Mammary epithelial cell (primary cell): ENCODE measurements at regions of chr2 and their contacts with region 1.

Region 1: DNA sequence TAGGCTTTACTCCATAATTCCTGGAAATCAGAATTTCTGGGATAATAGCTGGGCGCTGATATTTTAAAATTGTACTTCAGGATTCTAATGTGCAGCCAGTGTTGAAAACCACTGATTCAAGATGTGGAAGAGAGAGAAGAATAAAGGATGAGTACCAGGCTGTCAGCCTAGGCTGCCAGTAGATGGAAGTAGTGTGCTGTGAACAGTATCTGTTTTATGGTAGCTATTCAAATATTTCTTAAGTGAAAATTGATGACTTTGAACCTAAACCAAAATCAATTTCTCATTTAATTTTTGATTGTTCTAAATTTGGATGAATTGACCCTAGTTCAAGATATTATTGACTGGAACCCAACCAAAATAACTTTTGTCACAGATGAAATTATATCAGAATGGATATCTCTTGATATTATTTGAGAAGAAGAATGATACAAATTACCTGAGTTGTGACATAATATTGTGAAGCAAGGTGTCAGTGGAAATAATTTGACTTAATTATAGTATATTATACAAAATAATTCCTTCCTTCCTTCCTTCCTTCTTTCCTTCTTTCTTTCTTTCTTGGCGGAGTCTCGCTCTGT is 88.1 kb downstream of the COMMD1 start:
- DNase-seq: peak; percentile 44
- H3K4me3 ChIP-seq: no peak overlapping the region
- H3K27ac ChIP-seq: no peak overlapping the region
- H3K4me1 ChIP-seq: no peaks in the 10 kb centered on the region
- H3K27me3 ChIP-seq: no peaks in the 10 kb centered on the region
- CTCF ChIP-seq: peak; percentile 79 to 94

Region 2: DNA sequence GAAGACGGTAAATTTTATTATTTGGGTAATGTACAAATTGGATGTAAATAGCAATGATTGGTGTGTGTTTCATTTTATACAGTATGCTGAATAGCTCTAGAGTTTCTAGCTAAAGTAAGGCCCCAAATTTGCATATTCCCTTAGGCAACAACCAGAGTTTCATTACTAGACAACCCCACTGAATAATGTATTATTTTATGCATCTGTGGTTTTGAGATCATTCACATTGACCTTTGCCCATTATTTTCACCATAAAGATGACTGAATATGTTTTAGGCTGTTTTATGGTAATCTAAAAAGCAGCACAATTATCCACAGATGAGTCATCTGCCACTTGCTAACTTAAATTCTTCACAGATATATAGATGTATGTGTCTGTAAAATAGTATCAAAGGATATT is 876.0 kb before region 1 on chr2:
- CTCF ChIA-PET with region 1: no interaction called
- dilution Hi-C with region 1: no loop called
- in situ Hi-C with region 1: no loop called
- intact Hi-C with region 1: no loop called
- DNase-seq: peak; percentile 55
- H3K4me3 ChIP-seq: no peak overlapping the region
- H3K27ac ChIP-seq: no peak overlapping the region
- H3K4me1 ChIP-seq: no peaks in the 10 kb centered on the region
- H3K27me3 ChIP-seq: no peaks in the 10 kb centered on the region
- CTCF ChIP-seq: no peak

Region 3: GRCh38 chr2:61845320-61845719 is 148.2 kb before region 1 on chr2:
- CTCF ChIA-PET with region 1: no interaction called
- dilution Hi-C with region 1: no loop called
- in situ Hi-C with region 1: no loop called
- intact Hi-C with region 1: no loop called
- DNase-seq: no peak
- H3K4me3 ChIP-seq: no peak overlapping the region
- H3K27ac ChIP-seq: no peak overlapping the region
- H3K4me1 ChIP-seq: no peaks in the 10 kb centered on the region
- H3K27me3 ChIP-seq: no peaks in the 10 kb centered on the region
- CTCF ChIP-seq: no peak

Region 4: DNA sequence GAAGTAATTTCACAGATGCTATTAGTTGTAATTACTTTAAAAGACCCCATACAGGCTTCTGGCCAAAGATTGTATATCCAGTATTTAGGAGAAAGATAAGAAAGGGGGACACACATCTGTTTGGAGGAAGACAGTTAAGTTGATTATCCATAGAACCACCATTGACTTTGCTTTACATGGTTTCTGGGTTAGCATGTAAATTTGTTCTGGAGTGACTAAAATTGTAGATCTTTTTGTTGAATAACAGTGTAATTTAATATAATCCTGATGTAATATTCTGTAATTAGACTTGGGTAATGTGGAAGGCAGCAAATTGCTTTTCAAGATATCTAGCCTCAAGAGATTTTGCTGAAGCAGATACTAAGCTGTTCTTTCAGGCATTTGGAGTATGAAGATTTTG is 70.8 kb before region 1 on chr2:
- CTCF ChIA-PET with region 1: no interaction called
- dilution Hi-C with region 1: loop called (anchors 5 kb)
- in situ Hi-C with region 1: no loop called
- intact Hi-C with region 1: loop called (anchors 1 kb)
- DNase-seq: no peak
- H3K4me3 ChIP-seq: no peak overlapping the region
- H3K27ac ChIP-seq: no peak overlapping the region
- H3K4me1 ChIP-seq: no peaks in the 10 kb centered on the region
- H3K27me3 ChIP-seq: no peaks in the 10 kb centered on the region
- CTCF ChIP-seq: no peak

Region 5: DNA sequence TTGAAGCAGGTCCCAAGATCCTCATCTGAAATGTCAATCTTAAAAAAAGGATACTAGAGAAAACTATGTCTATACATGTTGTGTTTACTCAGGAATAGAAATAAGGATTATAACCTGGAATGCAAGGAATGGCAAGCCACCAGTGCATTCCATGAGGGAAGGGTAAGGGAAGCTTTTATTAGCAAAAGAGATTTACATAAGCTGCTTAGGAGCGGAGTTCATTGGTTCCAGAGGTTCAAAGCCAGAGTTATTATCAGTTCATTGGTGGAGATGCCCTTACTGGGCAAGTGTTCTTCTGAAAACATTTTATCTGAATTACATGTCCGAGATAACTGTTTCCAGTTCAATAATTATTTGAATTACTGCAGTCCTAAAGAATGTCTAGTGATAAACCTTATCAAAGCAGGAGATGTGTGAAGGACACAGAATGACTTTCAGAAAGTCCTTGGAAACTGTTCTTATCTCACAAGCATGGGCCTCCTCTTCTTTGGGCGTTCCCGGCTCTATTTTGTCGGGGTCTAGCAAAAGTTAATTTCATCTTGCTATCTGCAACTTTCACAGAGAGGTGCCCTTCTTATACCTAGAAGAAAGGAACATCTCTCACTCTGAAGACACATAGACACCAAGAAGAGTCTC is 64.6 kb before region 1 on chr2:
- CTCF ChIA-PET with region 1: no interaction called
- dilution Hi-C with region 1: loop called (anchors 5 kb)
- in situ Hi-C with region 1: no loop called
- intact Hi-C with region 1: no loop called
- DNase-seq: no peak
- H3K4me3 ChIP-seq: no peak overlapping the region
- H3K27ac ChIP-seq: no peak overlapping the region
- H3K4me1 ChIP-seq: no peaks in the 10 kb centered on the region
- H3K27me3 ChIP-seq: no peaks in the 10 kb centered on the region
- CTCF ChIP-seq: no peak

Region 6: DNA sequence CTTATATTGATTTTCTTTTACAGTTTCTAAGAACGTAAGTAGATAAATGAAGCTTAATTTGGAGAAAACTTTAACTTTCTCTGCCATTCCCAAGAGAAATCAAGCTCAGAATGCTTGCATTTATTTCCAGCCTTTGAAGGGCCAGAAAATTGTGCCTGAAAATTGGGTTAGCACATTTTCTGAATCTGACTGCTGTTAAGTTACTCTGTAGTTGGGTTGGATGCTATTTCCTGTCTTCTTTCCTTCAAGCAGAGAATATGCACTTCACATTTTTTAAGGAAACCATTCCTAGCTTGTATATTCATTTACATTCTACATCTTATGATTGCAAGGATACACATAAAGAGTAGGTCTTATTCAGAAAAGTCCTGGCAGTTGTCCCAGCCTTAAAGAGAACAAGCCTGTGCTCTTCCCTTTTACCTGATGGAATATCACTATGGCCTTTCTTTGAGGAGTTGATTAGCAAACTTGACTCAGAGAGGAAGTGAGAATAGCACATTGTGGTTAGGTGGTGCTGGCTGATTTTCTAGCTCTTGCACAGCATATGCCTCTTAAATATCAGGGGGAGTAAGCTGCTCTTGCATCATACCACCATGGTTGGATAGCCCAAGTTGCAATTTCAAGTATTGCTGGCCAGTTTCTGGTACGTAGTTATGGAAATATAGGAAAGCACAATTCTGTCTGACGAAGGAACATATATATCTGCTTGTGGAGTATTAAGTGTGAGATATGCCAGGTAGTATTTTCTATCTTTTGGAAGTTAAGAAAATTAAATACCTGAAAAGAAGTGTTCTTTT is 45.6 kb after region 1 on chr2:
- CTCF ChIA-PET with region 1: no interaction called
- dilution Hi-C with region 1: no loop called
- in situ Hi-C with region 1: no loop called
- intact Hi-C with region 1: no loop called
- DNase-seq: peak; percentile 93
- H3K4me3 ChIP-seq: no peak overlapping the region
- H3K27ac ChIP-seq: peak overlapping the region; percentile 53
- H3K4me1 ChIP-seq: peaks cover 31% of the 10 kb centered on the region
- H3K27me3 ChIP-seq: no peaks in the 10 kb centered on the region
- CTCF ChIP-seq: no peak

Region 7: GRCh38 chr2:62195421-62196277 is 202.1 kb after region 1 on chr2 and contains the start of gene B3GNT2:
- CTCF ChIA-PET with region 1: no interaction called
- dilution Hi-C with region 1: no loop called
- in situ Hi-C with region 1: no loop called
- intact Hi-C with region 1: loop called (anchors 1 kb)
- DNase-seq: peak; percentile 66
- H3K4me3 ChIP-seq: peak within 1 kb of the TSS; percentile 73 to 95 (median 76)
- H3K27ac ChIP-seq: peak within 1 kb of the TSS; percentile 68
- H3K4me1 ChIP-seq: peaks cover 10% of the 10 kb centered on the region
- H3K27me3 ChIP-seq: no peaks in the 10 kb centered on the region
- CTCF ChIP-seq: no peak
- total RNA-seq, gene B3GNT2: 35.2 to 44.8 TPM

Region 8: GRCh38 chr2:62293490-62294271 is 300.1 kb after region 1 on chr2:
- CTCF ChIA-PET with region 1: no interaction called
- dilution Hi-C with region 1: no loop called
- in situ Hi-C with region 1: no loop called
- intact Hi-C with region 1: loop called (anchors 5 kb)
- DNase-seq: peak; percentile 60
- H3K4me3 ChIP-seq: no peak overlapping the region
- H3K27ac ChIP-seq: no peak overlapping the region
- H3K4me1 ChIP-seq: peaks cover 16% of the 10 kb centered on the region
- H3K27me3 ChIP-seq: no peaks in the 10 kb centered on the region
- CTCF ChIP-seq: no peak

Region 9: GRCh38 chr2:62511636-62512035 is 518.1 kb after region 1 on chr2:
- CTCF ChIA-PET with region 1: no interaction called
- dilution Hi-C with region 1: no loop called
- in situ Hi-C with region 1: no loop called
- intact Hi-C with region 1: no loop called
- DNase-seq: no peak
- H3K4me3 ChIP-seq: no peak overlapping the region
- H3K27ac ChIP-seq: no peak overlapping the region
- H3K4me1 ChIP-seq: peaks cover 1% of the 10 kb centered on the region
- H3K27me3 ChIP-seq: no peaks in the 10 kb centered on the region
- CTCF ChIP-seq: no peak

Region 10: DNA sequence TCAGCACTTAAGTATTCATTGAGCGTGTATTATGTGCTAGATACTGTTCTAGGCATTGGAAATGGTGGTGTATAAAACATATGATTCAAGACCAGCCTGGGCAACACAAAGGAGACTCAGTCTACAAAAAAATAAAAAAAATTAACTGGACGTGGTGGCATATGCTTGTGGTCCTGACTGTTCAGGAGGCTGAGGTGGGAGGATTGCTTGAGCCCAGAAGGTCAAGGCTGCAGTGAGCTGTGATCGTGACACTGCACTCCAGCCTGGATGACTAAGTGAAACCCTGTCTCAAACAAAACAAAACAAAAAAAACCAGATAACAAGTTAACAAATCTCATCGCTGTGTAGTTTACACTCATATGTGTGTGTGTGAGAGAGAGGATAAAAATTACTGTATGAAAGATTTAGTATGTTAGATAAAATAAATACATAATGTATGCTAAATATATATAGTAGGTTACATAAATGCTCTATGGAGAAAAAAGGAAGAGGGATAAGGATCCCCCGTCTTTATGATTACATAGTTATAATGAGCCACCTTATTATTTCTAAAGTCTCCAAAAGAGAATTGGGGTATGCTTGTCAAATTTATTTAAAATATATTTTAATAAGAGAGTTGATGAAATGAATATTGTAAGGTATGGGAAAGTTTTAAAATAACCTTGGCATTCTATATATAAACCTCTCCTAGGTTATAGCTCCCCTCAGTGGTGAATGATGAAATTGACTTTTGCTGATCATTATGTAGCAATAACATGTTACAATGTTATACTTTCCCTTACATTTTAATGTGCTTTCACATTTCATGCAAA is 781.2 kb after region 1 on chr2:
- CTCF ChIA-PET with region 1: no interaction called
- dilution Hi-C with region 1: no loop called
- in situ Hi-C with region 1: no loop called
- intact Hi-C with region 1: loop called (anchors 1 kb)
- DNase-seq: peak; percentile 46
- H3K4me3 ChIP-seq: no peak overlapping the region
- H3K27ac ChIP-seq: peak overlapping the region; percentile 40
- H3K4me1 ChIP-seq: no peaks in the 10 kb centered on the region
- H3K27me3 ChIP-seq: no peaks in the 10 kb centered on the region
- CTCF ChIP-seq: peak; percentile 71